Activated CD4-positive, alpha-beta memory T cell treated with anti-CD3 and anti-CD28 coated beads for 36 hours (primary cell): ENCODE measurements at regions of chr16 and their contacts with region 1.

Region 1: DNA sequence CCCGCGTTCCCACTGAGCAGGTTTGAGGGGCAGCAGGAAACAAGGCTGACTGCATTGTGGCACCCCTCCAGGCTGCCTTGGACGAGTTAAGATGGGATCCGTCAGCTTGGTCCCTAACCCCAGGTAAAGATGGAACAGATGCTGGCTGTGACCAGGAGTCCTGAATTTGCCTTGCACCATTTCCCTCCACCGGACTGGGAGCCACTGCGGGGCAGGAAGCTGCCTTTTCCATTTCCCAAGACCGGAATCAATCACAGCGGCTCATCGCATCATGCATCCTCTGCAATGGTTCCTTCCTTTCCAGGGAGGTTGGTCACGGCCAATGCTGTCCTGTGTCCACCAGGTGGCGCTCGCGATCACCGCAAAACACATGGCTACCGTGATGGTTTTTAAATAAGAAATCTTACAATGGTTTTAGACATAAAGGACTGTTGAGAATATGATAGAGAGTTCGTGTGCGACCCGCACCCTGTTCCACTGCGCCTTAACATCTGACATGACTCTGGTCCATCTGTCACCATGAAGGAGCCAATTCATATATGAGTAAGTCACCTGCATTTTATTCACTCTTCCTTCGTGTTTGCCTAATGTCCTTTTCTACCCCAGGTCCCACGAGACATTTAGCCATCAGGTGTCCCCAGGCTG is 6.8 kb upstream of the MEAK7 start:
- DNase-seq: peak; percentile 82
- H3K4me3 Mint-ChIP-seq: no peak overlapping the region
- H3K27ac Mint-ChIP-seq: peak overlapping the region; percentile 44
- H3K4me1 Mint-ChIP-seq: peaks cover 67% of the 10 kb centered on the region
- H3K27me3 Mint-ChIP-seq: no peaks in the 10 kb centered on the region

Region 2: DNA sequence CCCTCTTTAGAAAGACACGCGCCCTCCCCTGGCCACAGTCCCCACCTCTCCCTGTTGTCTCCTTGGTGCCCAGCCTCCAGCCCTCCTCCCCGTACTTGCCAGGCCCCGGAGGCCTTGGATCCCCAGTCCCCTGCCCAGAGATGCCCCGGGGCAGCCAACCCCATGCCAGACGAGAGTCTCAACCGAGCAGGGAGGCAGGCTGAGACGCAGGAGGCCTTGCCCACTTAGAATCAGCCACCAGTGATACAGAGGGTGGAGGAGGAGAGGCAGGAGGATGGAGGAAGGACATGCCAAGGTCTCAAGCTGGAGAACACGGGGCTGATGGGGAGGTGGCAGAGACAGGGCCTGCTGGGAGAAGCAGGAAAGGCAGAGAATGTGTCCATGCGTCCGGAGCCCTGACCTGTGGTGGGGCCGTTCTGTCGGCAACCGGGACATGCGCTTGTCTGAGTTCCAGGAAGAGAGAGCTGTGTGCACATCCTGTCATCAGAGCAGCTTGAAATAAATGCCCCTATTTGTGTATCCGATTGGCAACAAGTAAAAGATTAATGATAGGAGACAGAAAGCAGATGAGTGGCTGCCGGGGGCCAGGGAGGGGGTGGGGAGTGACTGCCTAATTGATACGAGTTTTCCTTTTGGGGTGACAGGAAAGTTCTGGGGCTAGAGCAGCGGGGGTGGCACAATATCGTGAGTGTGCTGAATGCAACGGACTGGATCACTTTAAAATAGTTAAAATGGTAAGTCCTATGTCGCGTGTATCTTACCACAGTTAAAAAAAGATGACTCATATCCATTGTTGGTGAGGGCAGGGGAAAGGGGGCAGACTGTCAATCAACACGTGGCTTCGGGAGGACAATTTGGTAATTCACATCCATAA is 37.9 kb after region 1 on chr16:
- CTCF ChIA-PET with region 1: interaction called, 6 read pairs
- POLR2A ChIA-PET with region 1: interaction called, 9 read pairs
- intact Hi-C with region 1: loop called (anchors 1 kb)
- DNase-seq: peak; percentile 68
- H3K4me3 Mint-ChIP-seq: peak overlapping the region; percentile 86
- H3K27ac Mint-ChIP-seq: peak overlapping the region; percentile 98
- H3K4me1 Mint-ChIP-seq: peaks cover 65% of the 10 kb centered on the region
- H3K27me3 Mint-ChIP-seq: no peaks in the 10 kb centered on the region